Mammary epithelial cell (primary cell): ENCODE measurements at regions of chrX and their contacts with region 1.

Region 1: DNA sequence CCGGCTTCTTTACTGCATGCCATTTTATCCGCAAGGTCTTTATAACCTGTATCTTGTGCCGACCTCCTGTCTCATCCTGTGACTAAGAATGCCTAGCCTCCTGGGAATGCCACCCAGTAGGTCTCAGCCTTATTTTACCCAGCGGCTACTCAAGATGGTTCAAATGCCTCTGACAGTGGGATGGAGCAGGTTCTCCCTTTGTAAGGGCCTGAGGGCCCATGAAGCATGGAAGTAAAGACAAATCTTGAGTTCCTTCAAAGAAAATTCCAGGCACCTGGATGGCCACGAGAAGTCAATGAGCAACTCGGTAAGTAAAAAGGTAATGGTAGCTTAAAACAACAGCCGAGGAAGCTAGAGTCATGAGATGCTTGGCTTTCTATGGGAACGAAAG is 19.6 kb upstream of the PRKX start:
- DNase-seq: no peak
- H3K4me3 ChIP-seq: no peak overlapping the region
- H3K27ac ChIP-seq: no peak overlapping the region
- H3K4me1 ChIP-seq: no peaks in the 10 kb centered on the region
- H3K27me3 ChIP-seq: no peaks in the 10 kb centered on the region
- CTCF ChIP-seq: no peak

Region 2: GRCh38 chrX:3485727-3486126 is 247.3 kb before region 1 on chrX:
- CTCF ChIA-PET with region 1: no interaction called
- dilution Hi-C with region 1: no loop called
- in situ Hi-C with region 1: no loop called
- intact Hi-C with region 1: no loop called
- DNase-seq: no peak
- H3K4me3 ChIP-seq: no peak overlapping the region
- H3K27ac ChIP-seq: no peak overlapping the region
- H3K4me1 ChIP-seq: no peaks in the 10 kb centered on the region
- H3K27me3 ChIP-seq: no peaks in the 10 kb centered on the region
- CTCF ChIP-seq: no peak

Region 3: DNA sequence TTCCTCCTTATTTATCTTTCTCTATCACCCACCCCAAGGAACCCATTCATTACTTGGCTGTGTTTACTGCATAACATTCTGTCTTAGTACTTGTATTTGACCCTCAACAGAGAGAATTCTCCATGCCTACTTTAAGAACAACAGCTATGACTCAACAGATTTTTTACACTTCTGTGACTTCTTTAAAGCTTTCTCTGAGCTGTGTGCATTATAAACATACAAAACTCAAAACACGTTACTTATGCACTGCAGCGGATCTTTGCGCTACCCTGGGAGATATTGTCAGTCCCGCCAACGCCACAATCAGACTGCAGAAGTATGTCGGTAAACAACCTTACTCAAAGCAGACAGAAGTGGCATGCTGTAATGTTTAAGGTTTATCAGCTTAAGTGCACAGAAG is 54.7 kb before region 1 on chrX:
- CTCF ChIA-PET with region 1: no interaction called
- dilution Hi-C with region 1: loop called (anchors 5 kb)
- in situ Hi-C with region 1: no loop called
- intact Hi-C with region 1: no loop called
- DNase-seq: no peak
- H3K4me3 ChIP-seq: no peak overlapping the region
- H3K27ac ChIP-seq: no peak overlapping the region
- H3K4me1 ChIP-seq: no peaks in the 10 kb centered on the region
- H3K27me3 ChIP-seq: no peaks in the 10 kb centered on the region
- CTCF ChIP-seq: no peak

Region 4: GRCh38 chrX:3697701-3698279 is 35.2 kb before region 1 on chrX:
- CTCF ChIA-PET with region 1: no interaction called
- dilution Hi-C with region 1: no loop called
- in situ Hi-C with region 1: no loop called
- intact Hi-C with region 1: no loop called
- DNase-seq: peak; percentile 94
- H3K4me3 ChIP-seq: no peak overlapping the region
- H3K27ac ChIP-seq: peak overlapping the region; percentile 86
- H3K4me1 ChIP-seq: peaks cover 6% of the 10 kb centered on the region
- H3K27me3 ChIP-seq: no peaks in the 10 kb centered on the region
- CTCF ChIP-seq: no peak